ENCODE measurements at regions of chr15 and their contacts with region 1.

Region 1: GRCh38 chr15:64134345-64134829 is 17.1 kb upstream of the SNX22 start:
- DNase-seq: peak; percentile 25
- H3K4me3 Mint-ChIP-seq: no peak overlapping the region
- H3K27ac Mint-ChIP-seq: no peak overlapping the region
- H3K4me1 Mint-ChIP-seq: no peaks in the 10 kb centered on the region
- H3K27me3 Mint-ChIP-seq: no peaks in the 10 kb centered on the region
- CTCF ChIP-seq: no peak

Region 2: DNA sequence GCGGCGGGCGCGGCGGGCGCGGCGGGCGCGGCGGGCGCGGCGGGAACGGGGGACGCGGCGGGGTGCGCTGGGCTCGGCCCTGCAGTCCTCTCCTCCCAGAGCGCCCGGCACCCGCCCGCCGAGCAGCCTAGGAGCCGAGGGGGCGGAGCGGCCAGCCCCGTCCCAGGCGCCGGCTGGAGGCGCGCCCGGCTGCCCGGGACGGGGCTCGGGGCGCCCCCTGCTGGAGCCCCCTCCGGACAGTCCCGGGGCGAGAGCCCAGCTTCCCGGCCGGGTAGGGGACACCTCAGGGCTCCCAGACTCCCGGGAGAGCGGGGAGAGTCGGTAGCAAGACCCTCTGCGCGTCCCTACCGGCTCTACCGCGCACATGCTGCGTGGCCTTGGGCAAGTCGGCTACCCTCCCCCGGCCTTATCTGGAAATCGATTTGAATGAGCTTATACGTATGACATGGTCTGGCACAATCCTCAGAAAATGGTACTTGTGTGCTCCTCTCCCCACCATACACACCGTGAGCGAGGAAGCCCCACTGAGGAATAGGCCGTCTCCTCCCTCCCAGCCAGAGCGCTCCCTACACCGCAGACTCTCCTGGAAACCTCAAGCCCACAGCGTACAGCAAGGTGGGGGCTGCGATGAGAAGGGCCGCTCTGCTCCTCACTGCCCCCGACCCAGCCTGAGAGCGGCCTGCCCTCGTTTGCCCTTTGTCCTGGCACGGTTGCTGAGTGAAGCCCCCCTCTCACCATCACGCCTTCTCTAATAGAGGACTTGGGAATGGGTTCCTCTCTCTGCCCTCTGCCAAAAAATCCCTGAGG is 87.8 kb before region 1 on chr15 and contains the start of gene DAPK2:
- CTCF ChIA-PET with region 1: no interaction called
- POLR2A ChIA-PET with region 1: no interaction called
- intact Hi-C with region 1: no loop called
- DNase-seq: peak; percentile 72
- H3K4me3 Mint-ChIP-seq: peak within 1 kb of the TSS; percentile 62
- H3K27ac Mint-ChIP-seq: no peak within 1 kb of the TSS
- H3K4me1 Mint-ChIP-seq: peaks cover 5% of the 10 kb centered on the region
- H3K27me3 Mint-ChIP-seq: peaks cover 12% of the 10 kb centered on the region
- CTCF ChIP-seq: peak; percentile 86
- total RNA-seq, gene DAPK2: 4.6 and 6.8 TPM in 2 replicates

Region 3: GRCh38 chr15:64144565-64145281 is 10.3 kb after region 1 on chr15:
- CTCF ChIA-PET with region 1: interaction called, 8 read pairs
- POLR2A ChIA-PET with region 1: interaction called, 12 read pairs
- intact Hi-C with region 1: no loop called
- DNase-seq: no peak
- H3K4me3 Mint-ChIP-seq: no peak overlapping the region
- H3K27ac Mint-ChIP-seq: peak overlapping the region; percentile 39
- H3K4me1 Mint-ChIP-seq: no peaks in the 10 kb centered on the region
- H3K27me3 Mint-ChIP-seq: no peaks in the 10 kb centered on the region
- CTCF ChIP-seq: no peak

Region 4: GRCh38 chr15:64153480-64154367 is 19.3 kb after region 1 on chr15:
- CTCF ChIA-PET with region 1: interaction called, 14 read pairs
- POLR2A ChIA-PET with region 1: interaction called, 12 read pairs
- intact Hi-C with region 1: no loop called
- DNase-seq: peak; percentile 85
- H3K4me3 Mint-ChIP-seq: no peak overlapping the region
- H3K27ac Mint-ChIP-seq: no peak overlapping the region
- H3K4me1 Mint-ChIP-seq: peaks cover 15% of the 10 kb centered on the region
- H3K27me3 Mint-ChIP-seq: no peaks in the 10 kb centered on the region
- CTCF ChIP-seq: peak; percentile 97

Region 5: DNA sequence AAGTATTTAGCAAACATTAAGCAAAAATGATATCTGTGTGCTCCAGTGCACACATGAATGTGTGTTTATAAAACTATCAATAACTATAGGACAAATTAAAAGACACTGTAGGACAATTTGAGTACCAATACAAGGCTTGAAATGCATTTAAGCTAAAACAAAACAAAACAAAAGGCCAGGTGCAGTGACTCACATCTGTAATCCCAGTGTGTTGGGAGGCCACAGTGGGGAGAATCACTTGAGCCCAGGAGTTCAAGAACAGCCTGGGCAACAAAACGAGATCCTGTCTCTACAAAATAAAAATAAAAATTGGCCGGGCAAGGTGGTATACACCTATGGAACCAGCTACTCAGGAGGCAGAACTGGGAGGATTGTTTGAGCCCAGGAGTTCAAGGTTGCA is 170.9 kb after region 1 on chr15:
- CTCF ChIA-PET with region 1: no interaction called
- POLR2A ChIA-PET with region 1: no interaction called
- intact Hi-C with region 1: no loop called
- DNase-seq: peak; percentile 21
- H3K4me3 Mint-ChIP-seq: no peak overlapping the region
- H3K27ac Mint-ChIP-seq: peak overlapping the region; percentile 26
- H3K4me1 Mint-ChIP-seq: peaks cover 11% of the 10 kb centered on the region
- H3K27me3 Mint-ChIP-seq: no peaks in the 10 kb centered on the region
- CTCF ChIP-seq: no peak

Measured in MCF 10A (cell line).